Gastrocnemius medialis (tissue), 4 donors: ENCODE measurements at regions of chr11 and their contacts with region 1.

Region 1: DNA sequence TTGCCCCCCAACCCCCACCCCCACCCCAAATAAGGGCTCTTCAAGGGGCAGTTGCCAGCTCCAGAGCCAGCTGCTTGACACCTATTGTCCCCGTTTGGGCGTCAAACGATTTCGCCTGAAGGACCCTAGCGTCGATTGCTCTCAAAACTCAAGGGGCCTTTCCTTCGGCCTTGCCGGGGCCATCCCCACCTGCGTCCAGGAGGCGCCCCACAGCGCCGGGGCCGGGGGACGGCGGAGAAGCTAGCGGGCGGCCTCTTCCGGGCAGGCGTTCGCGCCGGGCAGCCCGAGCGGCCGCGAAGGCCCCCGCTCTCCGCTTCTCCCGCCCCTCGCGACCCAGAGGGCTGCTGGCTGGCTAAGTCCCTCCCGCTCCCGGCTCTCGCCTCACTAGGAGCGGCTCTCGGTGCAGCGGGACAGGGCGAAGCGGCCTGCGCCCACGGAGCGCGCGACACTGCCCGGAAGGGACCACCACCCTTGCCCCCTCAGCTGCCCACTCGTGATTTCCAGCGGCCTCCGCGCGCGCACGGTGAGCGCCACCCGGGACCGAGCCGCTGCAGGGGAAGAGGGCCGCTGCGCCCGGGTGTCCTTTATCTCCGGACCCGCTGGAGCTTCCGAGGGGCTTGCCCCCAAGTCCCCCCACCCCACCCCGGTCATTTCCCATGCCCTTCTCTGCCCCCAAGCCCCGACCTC is at the start of gene CAPRIN1:
- DNase-seq: peak; percentile 79 to 83
- ATAC-seq: peak; percentile 85 to 87
- H3K4me3 ChIP-seq: peak within 1 kb of the TSS; percentile 72 to 98 (median 92)
- H3K27ac ChIP-seq: peak within 1 kb of the TSS; percentile 95 to 99 (median 98)
- H3K4me1 ChIP-seq: peaks cover 37 to 44% of the 10 kb centered on the region in 2 donors
- H3K27me3 ChIP-seq: no peaks in the 10 kb centered on the region
- CTCF ChIP-seq: no peak
- POLR2A ChIP-seq: peak; percentile 74 to 78
- total RNA-seq, gene CAPRIN1: 70.9 to 82.2 (median 79.4) TPM

Region 2: DNA sequence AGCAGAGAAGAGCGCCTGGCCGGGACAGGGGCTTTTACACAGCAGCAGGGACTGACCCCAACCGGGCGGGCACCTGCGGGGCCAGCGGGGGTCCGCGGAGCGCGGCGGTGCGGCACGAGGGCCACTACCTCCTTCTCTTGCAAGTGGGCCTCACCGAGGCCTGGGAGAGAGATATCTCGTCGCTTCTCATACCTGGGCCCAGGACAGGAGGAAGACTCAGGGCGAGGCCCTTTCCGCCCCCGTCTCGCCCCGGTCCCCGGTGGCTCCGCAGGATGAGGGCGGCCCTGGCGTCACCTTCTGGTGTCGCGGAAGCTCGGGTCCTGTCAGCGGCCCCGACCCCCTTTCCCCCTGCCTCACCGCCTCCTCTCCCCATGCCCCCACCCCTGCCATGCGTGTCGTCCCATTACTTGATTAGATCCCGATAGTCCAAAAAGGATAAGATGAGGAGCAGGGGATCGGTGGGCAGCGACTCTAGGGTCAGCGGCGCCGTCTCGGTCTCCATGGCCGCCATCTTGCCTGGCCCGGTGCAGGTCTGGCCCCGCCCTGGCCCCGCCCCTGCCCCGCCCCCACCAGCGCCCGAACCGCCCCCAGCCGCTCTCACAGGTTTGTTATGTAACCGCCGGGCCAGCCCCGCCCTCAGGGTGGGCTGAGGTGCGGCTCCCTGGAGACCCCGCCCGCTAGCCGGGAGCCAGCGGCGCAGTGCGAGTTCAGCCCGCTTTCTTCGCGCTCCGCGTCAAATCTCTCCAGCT is 277.3 kb before region 1 on chr11 and contains the start of gene FBXO3:
- in situ Hi-C with region 1: no loop called
- intact Hi-C with region 1: loop called (anchors 1 kb)
- DNase-seq: peak; percentile 60 to 72
- ATAC-seq: peak; percentile 84 to 88
- H3K4me3 ChIP-seq: peak within 1 kb of the TSS; percentile 91 to 98 (median 96)
- H3K27ac ChIP-seq: peak within 1 kb of the TSS; percentile 93 to 96 (median 93)
- H3K4me1 ChIP-seq: peaks cover 27 to 32% of the 10 kb centered on the region in 2 donors
- H3K27me3 ChIP-seq: no peaks in the 10 kb centered on the region
- CTCF ChIP-seq: no peak
- POLR2A ChIP-seq: peak; percentile 53 to 54
- total RNA-seq, gene FBXO3: 31.2 to 45.8 (median 33.4) TPM

Region 3: GRCh38 chr11:33869481-33870422 is 181.7 kb before region 1 on chr11:
- in situ Hi-C with region 1: no loop called
- intact Hi-C with region 1: loop called (anchors 2 kb)
- DNase-seq: peak; percentile 31 to 72
- ATAC-seq: peak; percentile 84 to 86
- H3K4me3 ChIP-seq: peak overlapping the region; percentile 66 to 85 (median 76)
- H3K27ac ChIP-seq: peak overlapping the region; percentile 52 to 82 (median 74)
- H3K4me1 ChIP-seq: peaks cover 10 to 12% of the 10 kb centered on the region in 2 donors
- H3K27me3 ChIP-seq: no peaks in the 10 kb centered on the region
- CTCF ChIP-seq: no peak
- POLR2A ChIP-seq: no peak

Region 4: GRCh38 chr11:33996498-33997454 is 54.7 kb before region 1 on chr11:
- in situ Hi-C with region 1: no loop called
- intact Hi-C with region 1: loop called (anchors 5 kb)
- DNase-seq: peak; percentile 41 to 63
- ATAC-seq: peak; percentile 98 to 99
- H3K4me3 ChIP-seq: peak overlapping the region in 1 of 4 donors; percentile 10
- H3K27ac ChIP-seq: no peak overlapping the region
- H3K4me1 ChIP-seq: no peaks in the 10 kb centered on the region
- H3K27me3 ChIP-seq: no peaks in the 10 kb centered on the region
- CTCF ChIP-seq: peak; percentile 71 to 83 (median 80)
- POLR2A ChIP-seq: no peak

Region 5: DNA sequence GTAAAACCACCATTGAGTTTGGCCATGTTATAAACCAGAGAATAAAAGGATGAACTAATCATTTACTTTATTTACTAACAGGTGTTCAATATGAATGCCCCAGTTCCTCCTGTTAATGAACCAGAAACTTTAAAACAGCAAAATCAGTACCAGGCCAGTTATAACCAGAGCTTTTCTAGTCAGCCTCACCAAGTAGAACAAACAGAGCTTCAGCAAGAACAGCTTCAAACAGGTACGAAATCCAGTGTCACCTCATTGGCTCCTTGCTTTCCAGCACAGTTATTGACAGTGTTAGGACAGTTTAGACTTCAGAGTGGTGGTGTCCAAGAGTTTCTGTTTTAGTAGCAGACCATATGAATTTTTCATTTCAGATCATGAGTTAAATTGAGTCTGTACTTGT is 40.3 kb after region 1 on chr11:
- in situ Hi-C with region 1: no loop called
- intact Hi-C with region 1: no loop called
- DNase-seq: no peak
- ATAC-seq: no peak
- H3K4me3 ChIP-seq: no peak overlapping the region
- H3K27ac ChIP-seq: no peak overlapping the region
- H3K4me1 ChIP-seq: no peaks in the 10 kb centered on the region
- H3K27me3 ChIP-seq: no peaks in the 10 kb centered on the region
- CTCF ChIP-seq: no peak
- POLR2A ChIP-seq: no peak

Region 6: GRCh38 chr11:34105079-34105956 is 53.8 kb after region 1 on chr11 and contains the start of gene NAT10:
- in situ Hi-C with region 1: loop called in 1 of 4 experiments (anchors 5 kb)
- intact Hi-C with region 1: loop called (anchors 1 kb)
- DNase-seq: peak; percentile 97 to 99
- ATAC-seq: peak; percentile 95 to 98
- H3K4me3 ChIP-seq: peak within 1 kb of the TSS; percentile 71 to 97 (median 82)
- H3K27ac ChIP-seq: peak within 1 kb of the TSS; percentile 84 to 94 (median 90)
- H3K4me1 ChIP-seq: peaks cover 19 to 22% of the 10 kb centered on the region in 2 donors
- H3K27me3 ChIP-seq: no peaks in the 10 kb centered on the region
- CTCF ChIP-seq: peak in 4 of 5 experiments; percentile 19 to 44 (median 28)
- POLR2A ChIP-seq: peak; percentile 70 to 74
- total RNA-seq, gene NAT10: 17.2 to 27.7 (median 19.4) TPM

Region 7: DNA sequence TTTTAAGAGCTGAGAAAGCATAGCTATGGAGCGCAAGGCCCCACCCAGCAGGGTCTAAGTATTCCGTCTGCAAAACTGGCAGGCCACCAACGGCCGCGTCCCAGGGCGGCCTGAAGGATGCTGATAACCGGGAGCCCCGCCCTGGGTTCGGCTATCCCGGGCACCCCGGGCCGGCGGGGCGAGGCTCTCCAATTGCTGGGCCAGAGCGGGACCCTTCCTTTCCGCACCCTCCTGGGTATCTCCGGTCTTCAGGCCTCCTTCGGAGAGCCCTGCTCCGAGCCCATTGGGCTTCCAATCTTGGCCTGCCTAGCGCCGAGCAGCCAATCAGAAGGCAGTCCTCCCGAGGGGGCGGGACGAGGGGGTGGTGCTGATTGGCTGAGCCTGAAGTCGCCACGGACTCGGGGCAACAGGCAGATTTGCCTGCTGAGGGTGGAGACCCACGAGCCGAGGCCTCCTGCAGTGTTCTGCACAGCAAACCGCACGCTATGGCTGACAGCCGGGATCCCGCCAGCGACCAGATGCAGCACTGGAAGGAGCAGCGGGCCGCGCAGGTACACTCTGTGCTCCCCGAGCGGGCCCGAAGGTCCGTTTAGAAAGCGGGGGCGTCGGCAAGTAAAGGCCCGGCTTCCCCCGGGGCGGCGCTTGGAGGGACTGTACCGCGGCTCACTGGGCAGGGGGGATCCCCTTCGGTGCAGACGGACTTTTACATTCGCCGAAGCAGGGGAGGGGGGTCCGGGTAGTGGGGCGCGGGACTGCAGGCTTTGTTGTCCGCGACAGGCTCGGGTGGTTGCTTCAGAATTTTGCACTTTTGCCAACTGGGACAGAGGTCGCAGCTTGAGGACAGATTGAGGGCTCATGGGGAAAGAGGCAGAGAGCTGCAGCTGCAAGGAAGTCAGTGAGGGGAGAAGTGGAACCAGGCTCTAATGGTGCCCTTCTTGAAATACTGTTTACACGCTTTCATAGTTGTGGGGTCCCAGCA is 387.3 kb after region 1 on chr11 and contains the start of gene CAT:
- in situ Hi-C with region 1: no loop called
- intact Hi-C with region 1: loop called (anchors 1 kb)
- DNase-seq: peak; percentile 98
- ATAC-seq: peak; percentile 96
- H3K4me3 ChIP-seq: peak within 1 kb of the TSS; percentile 85 to 98 (median 89)
- H3K27ac ChIP-seq: peak within 1 kb of the TSS; percentile 95 to 96 (median 96)
- H3K4me1 ChIP-seq: peaks cover 25 to 50% of the 10 kb centered on the region in 2 donors
- H3K27me3 ChIP-seq: no peaks in the 10 kb centered on the region
- CTCF ChIP-seq: no peak
- POLR2A ChIP-seq: peak; percentile 78 to 79
- total RNA-seq, gene CAT: 107 to 150 (median 128) TPM

Region 8: DNA sequence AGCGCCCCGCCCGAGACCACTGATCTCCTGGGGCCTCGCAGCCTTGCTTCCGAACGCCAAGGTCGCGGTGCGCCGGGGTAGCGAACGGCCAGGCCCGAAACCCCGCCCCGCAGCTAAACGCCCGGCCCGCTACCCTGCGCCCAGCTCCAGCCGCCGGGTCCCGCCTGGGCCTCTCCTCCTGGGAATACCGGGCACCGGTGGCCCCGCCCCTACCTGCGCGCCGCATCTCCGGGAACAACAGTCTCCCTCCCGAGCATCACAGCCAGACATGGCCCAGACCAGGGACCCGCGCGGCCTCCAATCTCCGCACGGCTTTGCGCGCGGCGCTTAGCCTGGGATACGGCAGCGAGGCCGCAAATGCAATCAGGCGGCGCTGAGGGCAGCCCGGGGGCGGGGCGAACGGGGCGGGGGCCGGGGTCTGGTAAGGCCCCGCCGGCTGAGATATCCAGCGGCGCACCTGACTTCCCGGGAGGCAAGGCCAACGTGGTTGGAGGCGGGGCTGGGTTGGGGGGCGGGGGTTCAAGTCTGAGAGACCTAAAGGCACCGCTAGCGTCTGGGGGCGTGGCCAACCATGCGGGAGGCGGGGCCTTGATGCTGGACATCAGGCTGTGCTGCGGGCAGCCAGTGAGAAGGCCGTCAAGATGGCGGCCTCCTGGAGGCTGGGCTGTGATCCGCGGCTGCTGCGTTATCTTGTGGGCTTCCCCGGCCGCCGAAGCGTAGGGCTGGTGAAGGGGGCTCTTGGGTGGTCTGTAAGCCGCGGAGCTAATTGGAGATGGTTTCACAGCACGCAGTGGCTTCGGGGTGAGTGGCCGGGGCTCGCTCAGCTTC is 864.7 kb after region 1 on chr11 and contains the starts of genes APIP and PDHX:
- in situ Hi-C with region 1: no loop called
- intact Hi-C with region 1: loop called (anchors 5 kb)
- DNase-seq: peak; percentile 97 to 99
- ATAC-seq: peak; percentile 86 to 92
- H3K4me3 ChIP-seq: peak within 1 kb of the TSS; percentile 86 to 93 (median 91)
- H3K27ac ChIP-seq: peak within 1 kb of the TSS; percentile 96 to 99 (median 97)
- H3K4me1 ChIP-seq: peaks cover 29 to 35% of the 10 kb centered on the region in 2 donors
- H3K27me3 ChIP-seq: no peaks in the 10 kb centered on the region
- CTCF ChIP-seq: peak in 1 of 5 experiments; percentile 6
- POLR2A ChIP-seq: peak; percentile 93 to 96
- total RNA-seq, gene APIP: 22.5 to 49.1 (median 31.5) TPM
- total RNA-seq, gene PDHX: 77.7 to 101 (median 87.3) TPM